WTC11 (cell line): ENCODE measurements at regions of chr19 and their contacts with region 1.

Region 1: GRCh38 chr19:38769635-38770211 is 3.6 kb downstream of the LGALS7 start:
- DNase-seq: peak; percentile 92
- ATAC-seq: peak; percentile 72
- H3K4me3 Mint-ChIP-seq: peak overlapping the region; percentile 44
- H3K27ac Mint-ChIP-seq: no peak overlapping the region
- H3K4me1 Mint-ChIP-seq: peaks cover 4% of the 10 kb centered on the region
- H3K27me3 Mint-ChIP-seq: peaks cover 9% of the 10 kb centered on the region
- CTCF ChIP-seq: peak; percentile 86

Region 2: DNA sequence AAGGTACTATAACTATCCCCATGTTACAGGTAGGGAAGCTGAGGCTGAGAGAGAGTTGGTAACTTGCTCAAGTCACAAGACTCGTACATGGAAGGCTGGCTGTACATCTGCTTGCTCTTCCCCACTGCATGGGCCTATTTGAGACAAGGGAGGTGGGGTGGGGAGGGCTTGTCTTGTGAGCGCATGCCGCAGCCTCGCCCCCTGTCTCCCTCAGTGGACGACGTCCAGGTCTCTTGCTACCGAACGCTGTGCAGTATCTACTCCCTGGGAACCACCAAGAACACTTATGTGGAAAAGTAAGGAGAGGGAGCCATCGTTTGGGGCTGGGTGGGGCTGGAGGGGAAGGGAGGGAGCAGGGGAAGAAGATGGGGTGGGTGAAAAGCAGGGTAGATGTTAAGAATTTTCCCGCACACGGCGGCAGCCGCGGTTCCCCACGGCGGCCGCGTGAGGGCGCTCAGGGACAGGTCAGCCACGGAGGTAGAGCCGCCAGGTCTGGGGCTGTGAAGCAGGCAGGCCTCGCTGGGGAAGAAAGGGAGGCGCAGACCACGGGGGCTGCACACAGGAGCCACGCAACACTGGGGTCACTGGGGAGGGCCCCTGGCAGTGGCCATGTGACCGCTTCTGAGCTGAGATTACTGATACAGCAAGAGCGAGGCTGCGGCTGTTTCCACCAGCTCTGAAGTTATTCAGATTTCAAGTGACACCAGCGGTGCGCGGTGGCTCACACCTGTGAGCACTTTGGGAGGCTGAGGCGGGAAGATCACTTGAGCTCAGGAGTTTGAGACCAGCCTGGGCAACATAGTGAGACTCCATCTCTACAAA is 254.7 kb before region 1 on chr19:
- CTCF ChIA-PET with region 1: no interaction called
- POLR2A ChIA-PET with region 1: no interaction called
- DNase-seq: peak; percentile 84
- ATAC-seq: peak; percentile 93
- H3K4me3 Mint-ChIP-seq: no peak overlapping the region
- H3K27ac Mint-ChIP-seq: no peak overlapping the region
- H3K4me1 Mint-ChIP-seq: no peaks in the 10 kb centered on the region
- H3K27me3 Mint-ChIP-seq: no peaks in the 10 kb centered on the region
- CTCF ChIP-seq: peak; percentile 81

Region 3: GRCh38 chr19:38743394-38744295 is 26.1 kb before region 1 on chr19:
- CTCF ChIA-PET with region 1: interaction called, 13 read pairs
- POLR2A ChIA-PET with region 1: interaction called, 5 read pairs
- DNase-seq: no peak
- ATAC-seq: no peak
- H3K4me3 Mint-ChIP-seq: no peak overlapping the region
- H3K27ac Mint-ChIP-seq: no peak overlapping the region
- H3K4me1 Mint-ChIP-seq: no peaks in the 10 kb centered on the region
- H3K27me3 Mint-ChIP-seq: peaks cover 11% of the 10 kb centered on the region
- CTCF ChIP-seq: no peak

Region 4: DNA sequence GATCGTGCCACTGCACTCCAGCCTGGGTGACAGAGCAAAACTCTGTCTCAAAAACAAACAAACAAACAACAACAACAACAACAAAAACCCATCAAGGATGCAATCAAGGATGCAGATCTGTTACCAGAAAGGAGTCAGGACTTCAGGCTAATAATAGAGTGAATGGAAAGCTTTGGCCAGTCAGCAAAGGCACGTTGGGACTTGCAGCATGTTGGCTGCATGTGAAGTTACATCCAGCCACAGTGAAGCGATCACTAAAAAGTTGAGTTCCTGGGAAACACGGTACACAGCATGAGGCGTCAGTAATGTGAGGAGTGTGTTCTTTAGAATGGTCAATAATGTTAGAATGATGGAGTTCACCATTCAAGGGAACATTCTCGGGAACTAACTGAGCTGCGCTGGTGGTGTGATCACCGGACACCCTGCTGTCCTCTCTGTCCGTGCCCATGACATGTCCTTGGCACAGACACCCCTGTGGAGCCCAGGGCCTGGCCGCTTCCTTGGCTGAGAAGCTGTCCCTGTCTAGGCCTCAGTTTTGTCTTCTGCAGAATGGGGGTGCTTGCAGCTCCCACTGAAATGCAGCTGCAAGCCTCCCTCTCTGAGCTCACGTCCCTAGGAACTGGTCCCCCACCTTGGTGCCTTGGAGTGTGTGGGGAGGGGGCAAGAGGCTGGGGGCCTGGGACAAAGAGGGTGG is 17.0 kb after region 1 on chr19:
- CTCF ChIA-PET with region 1: interaction called, 26 read pairs
- POLR2A ChIA-PET with region 1: no interaction called
- DNase-seq: no peak
- ATAC-seq: no peak
- H3K4me3 Mint-ChIP-seq: no peak overlapping the region
- H3K27ac Mint-ChIP-seq: 0 out of 2 replicates have a peak overlapping the region, but pooled peaks have one; percentile 74
- H3K4me1 Mint-ChIP-seq: 0 out of 2 replicates have a peak, but pooled peaks cover 3% of the 10 kb centered on the region
- H3K27me3 Mint-ChIP-seq: peaks cover 19% of the 10 kb centered on the region
- CTCF ChIP-seq: no peak

Region 5: DNA sequence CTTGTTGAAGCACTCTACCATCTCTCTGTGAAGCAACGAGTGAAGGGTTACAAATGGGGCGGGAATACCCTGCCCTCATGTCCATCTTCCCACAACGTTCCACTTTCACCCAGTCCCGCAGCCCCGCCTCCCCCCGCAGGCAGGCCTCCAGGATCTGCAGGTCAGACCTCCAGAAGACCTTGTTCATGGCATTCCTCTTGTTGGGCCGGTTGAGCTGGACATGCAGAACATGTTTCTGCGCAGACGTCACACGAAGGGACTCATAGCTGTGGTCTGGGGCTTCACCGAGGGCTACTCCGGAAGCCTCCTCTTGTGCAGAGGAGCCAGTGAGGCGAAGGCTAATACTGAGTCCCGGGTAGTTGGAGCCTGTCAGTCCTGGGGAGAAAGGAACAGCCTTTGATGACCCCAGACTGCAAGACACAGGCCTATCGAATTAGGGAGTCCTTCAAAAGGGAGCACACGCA is 61.5 kb after region 1 on chr19:
- CTCF ChIA-PET with region 1: interaction called, 27 read pairs
- POLR2A ChIA-PET with region 1: no interaction called
- DNase-seq: peak; percentile 43
- ATAC-seq: peak; percentile 33
- H3K4me3 Mint-ChIP-seq: peak overlapping the region; percentile 81
- H3K27ac Mint-ChIP-seq: peak overlapping the region; percentile 69
- H3K4me1 Mint-ChIP-seq: peaks cover 24% of the 10 kb centered on the region
- H3K27me3 Mint-ChIP-seq: no peaks in the 10 kb centered on the region; the same call in 1 of the 2 replicates
- CTCF ChIP-seq: no peak

Region 6: DNA sequence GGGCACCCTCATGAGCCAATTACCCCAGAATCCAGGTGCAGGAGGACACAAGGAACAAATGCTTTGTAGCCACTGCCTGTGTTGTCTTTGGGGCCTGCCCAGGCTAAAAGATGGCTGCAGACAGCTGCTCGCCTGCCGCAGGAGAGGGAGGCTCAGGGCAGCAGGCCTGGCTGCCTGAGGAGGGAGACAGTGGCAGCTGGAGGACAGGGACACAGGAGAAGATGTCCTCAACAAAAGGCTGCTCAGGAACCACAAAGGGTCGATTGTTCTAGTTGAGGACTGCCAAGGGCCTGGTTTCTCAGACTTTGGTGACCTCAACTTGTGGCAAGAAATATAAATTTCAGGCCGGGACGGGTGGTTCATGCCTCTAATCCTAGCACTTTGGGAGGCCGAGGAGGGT is 122.0 kb after region 1 on chr19:
- CTCF ChIA-PET with region 1: interaction called, 10 read pairs
- POLR2A ChIA-PET with region 1: no interaction called
- DNase-seq: no peak
- ATAC-seq: no peak
- H3K4me3 Mint-ChIP-seq: no peak overlapping the region
- H3K27ac Mint-ChIP-seq: no peak overlapping the region
- H3K4me1 Mint-ChIP-seq: no peaks in the 10 kb centered on the region
- H3K27me3 Mint-ChIP-seq: peaks cover 2% of the 10 kb centered on the region; the same call in 1 of the 2 replicates
- CTCF ChIP-seq: no peak